Activated CD4-positive, alpha-beta T cell treated with anti-CD3 and anti-CD28 coated beads for 36 hours (primary cell): ENCODE measurements at regions of chr11 and their contacts with region 1.

Region 1: DNA sequence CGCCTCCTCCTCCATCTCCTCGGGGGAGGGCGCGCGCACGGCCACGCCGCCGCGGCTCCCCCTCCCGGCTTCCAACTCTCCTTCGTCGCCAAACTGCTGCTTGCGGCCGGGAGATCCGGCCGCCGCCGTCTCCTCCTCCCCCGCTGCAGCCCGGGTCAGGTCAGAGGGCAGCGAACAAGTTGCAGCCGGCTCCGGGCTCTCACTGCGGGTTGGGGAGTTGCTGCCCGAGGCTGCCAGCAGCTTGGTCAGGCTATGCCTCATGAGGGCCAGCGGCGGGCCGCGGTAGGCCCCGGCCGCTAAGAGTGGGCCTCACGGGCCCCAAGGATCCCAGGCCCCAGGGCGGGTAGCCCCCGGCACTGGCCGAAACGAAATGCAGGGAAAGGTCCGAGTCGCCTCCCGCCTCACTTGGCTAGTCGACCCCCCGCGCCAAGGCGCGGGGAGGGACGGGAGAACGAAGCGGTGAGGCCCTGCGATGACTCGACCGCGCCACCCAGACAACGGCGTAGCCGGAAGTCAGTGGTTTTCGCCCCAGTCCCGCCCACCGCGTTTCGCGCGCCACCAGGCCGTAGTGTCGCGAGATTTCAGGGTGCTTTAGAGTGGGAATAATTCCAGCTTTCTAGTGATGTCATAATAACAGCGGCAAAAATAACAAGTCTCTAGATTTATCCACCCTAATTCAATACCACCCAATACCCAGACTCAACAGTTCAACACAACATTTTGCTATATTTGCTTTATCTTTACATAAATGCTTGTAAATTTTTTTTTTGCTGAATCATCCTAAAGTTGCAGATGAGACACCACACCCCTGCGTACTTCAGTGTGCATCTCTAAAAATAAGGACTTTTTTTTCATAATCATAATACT is at the start of gene CREBZF:
- DNase-seq: peak; percentile 97
- ATAC-seq: peak; percentile 88
- H3K4me3 Mint-ChIP-seq: peak within 1 kb of the TSS; percentile 100
- H3K27ac Mint-ChIP-seq: peak within 1 kb of the TSS; percentile 99
- H3K4me1 Mint-ChIP-seq: peaks cover 29% of the 10 kb centered on the region
- H3K27me3 Mint-ChIP-seq: no peaks in the 10 kb centered on the region
- total RNA-seq, gene CREBZF: 30.4 to 35.9 TPM

Region 2: DNA sequence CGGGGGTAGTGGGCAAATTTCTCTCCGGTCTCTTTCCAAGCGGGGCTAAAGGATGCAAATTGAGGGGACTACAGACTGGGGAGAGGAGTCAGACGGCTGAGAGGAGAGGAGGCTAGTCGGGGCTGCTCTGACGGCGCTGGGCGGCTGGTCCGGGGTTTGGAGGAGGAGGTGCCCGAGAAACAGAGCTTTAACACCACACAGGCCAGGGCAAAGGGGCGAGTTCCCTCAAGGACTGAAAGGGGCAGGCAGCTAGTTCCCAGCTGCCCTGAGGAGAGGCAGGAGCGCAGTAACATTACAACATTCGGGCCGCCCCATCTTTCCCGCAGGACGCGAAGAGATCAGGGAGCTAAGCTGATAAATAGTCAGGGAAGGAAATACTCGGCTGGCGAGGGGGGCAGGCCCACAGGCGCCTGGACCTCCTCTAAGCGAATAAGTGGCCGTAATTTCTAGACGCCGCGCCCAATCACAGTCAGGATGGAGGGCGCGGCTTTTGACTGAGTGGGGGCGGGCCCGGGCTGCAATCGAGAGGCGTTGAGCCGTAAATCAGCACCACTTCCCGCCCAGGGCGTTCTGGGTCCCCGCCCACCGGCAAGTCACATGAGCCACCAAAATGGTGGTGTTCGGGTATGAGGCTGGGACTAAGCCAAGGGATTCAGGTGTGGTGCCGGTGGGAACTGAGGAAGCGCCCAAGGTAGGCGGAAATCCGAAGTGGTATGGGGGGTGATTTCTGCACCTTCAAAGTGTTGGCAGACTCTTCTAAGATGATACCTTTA is 36.7 kb before region 1 on chr11 and contains the start of gene TMEM126B:
- CTCF ChIA-PET with region 1: interaction called, 3 read pairs
- POLR2A ChIA-PET with region 1: interaction called, 6 read pairs
- intact Hi-C with region 1: loop called (anchors 1 kb)
- DNase-seq: peak; percentile 99
- ATAC-seq: peak; percentile 95
- H3K4me3 Mint-ChIP-seq: peak within 1 kb of the TSS; percentile 98
- H3K27ac Mint-ChIP-seq: peak within 1 kb of the TSS; percentile 100
- H3K4me1 Mint-ChIP-seq: peaks cover 35% of the 10 kb centered on the region
- H3K27me3 Mint-ChIP-seq: no peaks in the 10 kb centered on the region
- total RNA-seq, gene TMEM126B: 62.7 to 74.2 TPM

Region 3: DNA sequence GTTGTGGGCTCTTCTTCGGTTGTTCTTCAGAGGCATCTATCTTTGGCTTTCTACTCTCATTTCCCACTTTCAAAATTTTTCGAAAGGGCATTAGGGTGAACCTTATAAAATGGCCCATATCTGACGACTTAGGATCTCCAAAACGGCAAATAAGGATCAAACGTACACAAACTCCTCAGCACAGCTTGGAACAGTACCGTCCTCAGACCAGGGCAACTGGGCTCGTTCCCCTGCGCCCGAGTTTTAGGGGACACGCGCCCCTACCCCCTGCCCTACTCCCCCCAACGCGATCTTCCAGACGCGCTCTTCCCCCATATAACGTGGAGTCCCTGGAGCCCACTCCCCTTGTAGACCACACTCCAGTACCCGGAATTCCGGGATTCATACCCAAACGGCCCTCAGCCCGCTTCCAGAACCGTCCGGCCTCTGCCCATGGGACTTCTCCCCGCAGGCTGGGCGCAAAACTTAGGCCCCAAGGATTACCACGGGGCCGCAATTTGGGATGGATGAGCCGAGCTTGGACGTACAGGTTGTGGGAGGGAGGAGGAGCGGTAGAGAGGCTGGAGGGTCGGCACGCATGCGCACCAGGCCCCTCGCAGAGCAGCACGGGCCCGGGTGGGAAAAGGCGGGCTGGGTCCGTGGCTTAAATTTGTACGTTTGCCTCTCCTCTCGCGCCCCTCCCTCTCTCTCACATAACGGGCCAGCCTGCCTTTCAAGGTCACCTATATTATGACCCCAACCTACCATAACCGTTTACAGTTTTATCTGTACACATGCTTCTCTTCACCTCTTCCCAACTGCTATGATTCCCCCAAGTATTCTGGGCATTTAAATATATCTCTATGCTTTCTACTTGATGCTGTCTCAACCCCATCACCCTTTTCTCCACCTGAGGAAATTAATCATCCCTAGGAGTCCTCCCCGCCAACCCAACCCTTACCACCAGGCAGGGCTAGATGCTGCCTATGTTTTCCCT is 17.8 kb after region 1 on chr11:
- CTCF ChIA-PET with region 1: interaction called, 3 read pairs
- POLR2A ChIA-PET with region 1: interaction called, 3 read pairs
- intact Hi-C with region 1: loop called (anchors 1 to 2 kb)
- DNase-seq: peak; percentile 81
- ATAC-seq: peak; percentile 90
- H3K4me3 Mint-ChIP-seq: peak overlapping the region; percentile 77
- H3K27ac Mint-ChIP-seq: peak overlapping the region; percentile 87
- H3K4me1 Mint-ChIP-seq: peaks cover 16% of the 10 kb centered on the region
- H3K27me3 Mint-ChIP-seq: peaks cover 5% of the 10 kb centered on the region

Region 4: GRCh38 chr11:85752890-85753581 is 88.2 kb after region 1 on chr11:
- CTCF ChIA-PET with region 1: no interaction called
- POLR2A ChIA-PET with region 1: no interaction called
- intact Hi-C with region 1: loop called in 1 of 2 experiments (anchors 1 kb)
- DNase-seq: peak; percentile 90
- ATAC-seq: peak; percentile 89
- H3K4me3 Mint-ChIP-seq: peak overlapping the region; percentile 47
- H3K27ac Mint-ChIP-seq: peak overlapping the region; percentile 94
- H3K4me1 Mint-ChIP-seq: peaks cover 91% of the 10 kb centered on the region
- H3K27me3 Mint-ChIP-seq: no peaks in the 10 kb centered on the region

Region 5: GRCh38 chr11:85826116-85826855 is 161.4 kb after region 1 on chr11:
- CTCF ChIA-PET with region 1: no interaction called
- POLR2A ChIA-PET with region 1: no interaction called
- intact Hi-C with region 1: loop called in 1 of 2 experiments (anchors 5 kb)
- DNase-seq: peak; percentile 48
- ATAC-seq: no peak
- H3K4me3 Mint-ChIP-seq: no peak overlapping the region
- H3K27ac Mint-ChIP-seq: peak overlapping the region; percentile 11
- H3K4me1 Mint-ChIP-seq: peaks cover 65% of the 10 kb centered on the region
- H3K27me3 Mint-ChIP-seq: no peaks in the 10 kb centered on the region